Activated naive CD4-positive, alpha-beta T cell treated with anti-CD3 and anti-CD28 coated beads for 36 hours (primary cell): ENCODE measurements at regions of chr1 and their contacts with region 1.

Region 1: GRCh38 chr1:169466259-169467230 is 19.2 kb downstream of the SLC19A2 start:
- DNase-seq: peak; percentile 57
- H3K4me3 Mint-ChIP-seq: no peak overlapping the region
- H3K27ac Mint-ChIP-seq: no peak overlapping the region
- H3K4me1 Mint-ChIP-seq: peaks cover 4% of the 10 kb centered on the region
- H3K27me3 Mint-ChIP-seq: no peaks in the 10 kb centered on the region

Region 2: GRCh38 chr1:169427081-169427641 is 39.4 kb before region 1 on chr1 and contains the start of gene CCDC181:
- CTCF ChIA-PET with region 1: no interaction called
- intact Hi-C with region 1: no loop called
- DNase-seq: peak; percentile 80
- H3K4me3 Mint-ChIP-seq: peak within 1 kb of the TSS; percentile 83
- H3K27ac Mint-ChIP-seq: no peak within 1 kb of the TSS
- H3K4me1 Mint-ChIP-seq: peaks cover 4% of the 10 kb centered on the region
- H3K27me3 Mint-ChIP-seq: peaks cover 62% of the 10 kb centered on the region
- total RNA-seq, gene CCDC181: 0.17 TPM in 1 of 2 experiments, not detected in the other

Region 3: GRCh38 chr1:169511316-169512028 is 44.9 kb after region 1 on chr1:
- CTCF ChIA-PET with region 1: no interaction called
- intact Hi-C with region 1: loop called (anchors 2 kb)
- DNase-seq: no peak
- H3K4me3 Mint-ChIP-seq: no peak overlapping the region
- H3K27ac Mint-ChIP-seq: peak overlapping the region; percentile 34
- H3K4me1 Mint-ChIP-seq: peaks cover 25% of the 10 kb centered on the region
- H3K27me3 Mint-ChIP-seq: no peaks in the 10 kb centered on the region

Region 4: DNA sequence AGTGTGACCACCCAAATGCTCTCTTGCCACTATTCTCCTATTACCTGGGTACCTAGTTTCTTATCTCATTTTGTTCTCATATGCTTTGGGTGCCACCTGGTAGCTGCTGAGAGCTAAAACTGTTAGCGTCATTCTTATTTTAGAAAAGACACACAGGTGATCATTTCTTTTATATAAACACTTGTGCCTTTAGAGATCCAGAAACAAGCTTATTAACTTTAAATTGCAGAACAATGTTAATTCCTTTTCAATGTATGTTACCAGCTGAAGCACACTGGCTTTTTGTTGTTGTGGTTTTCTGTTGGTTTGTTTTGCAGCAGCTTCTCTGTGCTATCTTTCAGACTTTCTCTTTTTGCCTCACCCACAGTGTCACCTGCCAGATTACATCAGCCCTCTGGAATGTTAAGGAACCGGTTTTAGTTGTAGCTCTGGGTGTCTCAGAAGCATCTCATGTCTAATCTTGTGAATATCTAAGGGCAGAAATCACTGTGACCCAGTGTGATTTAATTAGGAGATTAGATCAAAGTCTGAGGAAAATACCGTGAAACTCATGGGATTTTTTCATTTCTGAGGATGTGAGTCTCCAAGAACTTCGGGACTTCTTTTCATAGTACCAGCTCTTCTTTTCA is 62.6 kb after region 1 on chr1:
- CTCF ChIA-PET with region 1: no interaction called
- intact Hi-C with region 1: loop called (anchors 5 kb)
- DNase-seq: no peak
- H3K4me3 Mint-ChIP-seq: no peak overlapping the region
- H3K27ac Mint-ChIP-seq: no peak overlapping the region
- H3K4me1 Mint-ChIP-seq: peaks cover 16% of the 10 kb centered on the region
- H3K27me3 Mint-ChIP-seq: no peaks in the 10 kb centered on the region

Region 5: GRCh38 chr1:169546087-169546995 is 79.8 kb after region 1 on chr1:
- CTCF ChIA-PET with region 1: interaction called, 3 read pairs
- intact Hi-C with region 1: loop called (anchors 1 kb)
- DNase-seq: peak; percentile 48
- H3K4me3 Mint-ChIP-seq: no peak overlapping the region
- H3K27ac Mint-ChIP-seq: no peak overlapping the region
- H3K4me1 Mint-ChIP-seq: no peaks in the 10 kb centered on the region
- H3K27me3 Mint-ChIP-seq: no peaks in the 10 kb centered on the region

Region 6: GRCh38 chr1:169809370-169810095 is 343.0 kb after region 1 on chr1:
- CTCF ChIA-PET with region 1: no interaction called
- intact Hi-C with region 1: loop called (anchors 1 kb)
- DNase-seq: peak; percentile 10
- H3K4me3 Mint-ChIP-seq: no peak overlapping the region
- H3K27ac Mint-ChIP-seq: no peak overlapping the region
- H3K4me1 Mint-ChIP-seq: no peaks in the 10 kb centered on the region
- H3K27me3 Mint-ChIP-seq: no peaks in the 10 kb centered on the region